ENCODE measurements at regions of chr15 and their contacts with region 1.

Region 1: GRCh38 chr15:68304589-68305337 is 27.2 kb downstream of the FEM1B start:
- DNase-seq: no peak
- ATAC-seq: no peak
- H3K4me3 ChIP-seq: no peak overlapping the region
- H3K27ac ChIP-seq: no peak overlapping the region
- H3K4me1 ChIP-seq: peaks cover 11% of the 10 kb centered on the region
- H3K27me3 ChIP-seq: no peaks in the 10 kb centered on the region
- CTCF ChIP-seq: no peak
- POLR2A ChIP-seq: no peak
- RAD21 ChIP-seq: no peak

Region 2: GRCh38 chr15:68252925-68253534 is 51.7 kb before region 1 on chr15:
- CTCF ChIA-PET with region 1: no interaction called
- POLR2A ChIA-PET with region 1: no interaction called
- dilution Hi-C with region 1: no loop called
- in situ Hi-C with region 1: no loop called
- intact Hi-C with region 1: loop called (anchors 1 kb)
- DNase-seq: peak; percentile 85
- ATAC-seq: peak; percentile 79
- H3K4me3 ChIP-seq: no peak overlapping the region
- H3K27ac ChIP-seq: no peak overlapping the region
- H3K4me1 ChIP-seq: no peaks in the 10 kb centered on the region; the same call in 1 of the 2 replicates
- H3K27me3 ChIP-seq: peaks cover 2% of the 10 kb centered on the region; the same call in 1 of the 2 replicates
- CTCF ChIP-seq: peak; percentile 91
- POLR2A ChIP-seq: no peak
- RAD21 ChIP-seq: peak; percentile 91

Region 3: DNA sequence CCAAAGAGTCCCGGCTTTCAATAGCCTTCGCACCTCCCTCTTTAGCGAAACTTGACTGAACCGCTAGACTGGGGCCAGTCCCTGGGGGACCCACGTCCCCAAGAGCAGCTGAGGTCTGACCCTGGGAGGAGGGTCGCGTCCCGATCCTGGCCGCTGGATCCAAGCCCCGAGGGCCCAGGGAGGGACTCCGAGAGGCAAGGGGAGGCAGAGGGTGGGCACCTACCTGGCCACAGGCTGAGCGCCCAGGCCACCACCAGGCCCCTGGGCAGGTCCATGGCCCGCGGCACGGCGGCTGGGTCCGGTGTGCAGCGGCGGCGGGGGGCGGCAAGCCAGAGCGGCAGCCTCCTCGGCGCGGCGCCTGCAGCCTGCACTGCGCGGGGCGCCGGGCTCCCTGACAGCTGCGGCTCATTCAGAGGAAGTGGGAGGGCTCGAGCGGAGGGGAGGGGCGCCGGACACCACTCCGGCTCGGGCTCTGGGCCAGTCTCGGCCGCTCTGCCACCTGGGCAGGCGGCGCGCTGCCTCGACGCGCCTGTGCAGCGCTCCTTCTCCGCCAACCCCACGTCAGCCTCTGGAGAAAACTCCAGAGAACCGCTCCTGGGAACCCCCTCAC is 127.1 kb after region 1 on chr15 and contains the start of gene ITGA11:
- CTCF ChIA-PET with region 1: no interaction called
- POLR2A ChIA-PET with region 1: no interaction called
- dilution Hi-C with region 1: no loop called
- in situ Hi-C with region 1: no loop called
- intact Hi-C with region 1: loop called (anchors 5 kb)
- DNase-seq: peak; percentile 34
- ATAC-seq: peak; percentile 90
- H3K4me3 ChIP-seq: peak within 1 kb of the TSS; percentile 57
- H3K27ac ChIP-seq: peak within 1 kb of the TSS; percentile 9; the same call in 1 of the 2 replicates
- H3K4me1 ChIP-seq: peaks cover 13% of the 10 kb centered on the region
- H3K27me3 ChIP-seq: peaks cover 37% of the 10 kb centered on the region
- CTCF ChIP-seq: no peak
- POLR2A ChIP-seq: no peak
- RAD21 ChIP-seq: no peak; the same call in 1 of the 2 replicates
- total RNA-seq, gene ITGA11: 2.5 and 4.1 TPM in 2 replicates

Region 4: GRCh38 chr15:68550481-68551295 is 245.9 kb after region 1 on chr15:
- CTCF ChIA-PET with region 1: interaction called, 4 read pairs
- POLR2A ChIA-PET with region 1: no interaction called
- dilution Hi-C with region 1: no loop called
- in situ Hi-C with region 1: loop called (anchors 5 kb)
- intact Hi-C with region 1: loop called (anchors 1 kb)
- DNase-seq: peak; percentile 44
- ATAC-seq: peak; percentile 67
- H3K4me3 ChIP-seq: no peak overlapping the region
- H3K27ac ChIP-seq: no peak overlapping the region
- H3K4me1 ChIP-seq: peaks cover 5% of the 10 kb centered on the region
- H3K27me3 ChIP-seq: peaks cover 2% of the 10 kb centered on the region
- CTCF ChIP-seq: peak; percentile 72
- POLR2A ChIP-seq: no peak
- RAD21 ChIP-seq: peak; percentile 71

Region 5: DNA sequence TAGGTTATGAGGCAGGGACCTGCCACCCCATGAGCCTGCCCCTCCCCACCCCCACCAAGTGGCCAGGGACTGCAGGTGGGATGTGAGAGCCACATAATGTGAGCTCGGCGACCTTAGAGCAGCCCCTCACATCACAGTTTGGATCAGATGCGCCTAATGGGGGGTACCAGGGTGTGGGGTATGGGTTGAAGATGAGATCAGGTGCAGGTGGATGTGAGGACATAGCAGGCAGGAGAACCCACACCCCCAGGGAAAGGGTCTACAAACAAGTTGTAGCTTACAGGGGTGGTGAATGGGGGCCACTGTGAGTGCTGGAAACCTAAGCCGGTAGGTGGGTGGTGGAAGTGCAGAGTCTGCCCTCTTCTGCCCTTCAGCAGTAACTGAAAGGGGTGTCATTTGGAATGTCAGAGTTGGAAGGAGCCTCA is 368.0 kb after region 1 on chr15:
- CTCF ChIA-PET with region 1: interaction called, 5 read pairs
- POLR2A ChIA-PET with region 1: no interaction called
- dilution Hi-C with region 1: no loop called
- in situ Hi-C with region 1: loop called (anchors 5 kb)
- intact Hi-C with region 1: loop called (anchors 1 kb)
- DNase-seq: peak; percentile 19
- ATAC-seq: no peak
- H3K4me3 ChIP-seq: no peak overlapping the region
- H3K27ac ChIP-seq: no peak overlapping the region
- H3K4me1 ChIP-seq: no peaks in the 10 kb centered on the region
- H3K27me3 ChIP-seq: no peaks in the 10 kb centered on the region
- CTCF ChIP-seq: peak; percentile 38
- POLR2A ChIP-seq: no peak
- RAD21 ChIP-seq: peak; percentile 55

Region 6: GRCh38 chr15:68875377-68876116 is 570.8 kb after region 1 on chr15:
- CTCF ChIA-PET with region 1: interaction called, 4 read pairs
- POLR2A ChIA-PET with region 1: no interaction called
- dilution Hi-C with region 1: no loop called
- in situ Hi-C with region 1: loop called (anchors 10 kb)
- intact Hi-C with region 1: loop called (anchors 2 kb)
- DNase-seq: peak; percentile 88
- ATAC-seq: peak; percentile 92
- H3K4me3 ChIP-seq: peak overlapping the region; percentile 28
- H3K27ac ChIP-seq: no peak overlapping the region
- H3K4me1 ChIP-seq: no peaks in the 10 kb centered on the region
- H3K27me3 ChIP-seq: peaks cover 24% of the 10 kb centered on the region
- CTCF ChIP-seq: peak; percentile 92
- POLR2A ChIP-seq: no peak
- RAD21 ChIP-seq: peak; percentile 96